GM10248 (cell line): ENCODE measurements at regions of chr12 and their contacts with region 1.

Region 1: GRCh38 chr12:57238854-57239554 is 9.5 kb downstream of the SHMT2 start:
- DNase-seq: peak; percentile 95
- CTCF ChIP-seq: peak; percentile 100

Region 2: GRCh38 chr12:56785141-56785865 is 453.7 kb before region 1 on chr12:
- CTCF ChIA-PET with region 1: no interaction called
- POLR2A ChIA-PET with region 1: no interaction called
- DNase-seq: no peak
- CTCF ChIP-seq: no peak

Region 3: GRCh38 chr12:57213058-57213715 is 25.8 kb before region 1 on chr12:
- CTCF ChIA-PET with region 1: interaction called, 403 read pairs
- POLR2A ChIA-PET with region 1: interaction called, 3 read pairs
- DNase-seq: peak; percentile 89
- CTCF ChIP-seq: peak; percentile 97

Region 4: GRCh38 chr12:57219993-57220754 is 18.8 kb before region 1 on chr12:
- CTCF ChIA-PET with region 1: interaction called, 403 read pairs
- POLR2A ChIA-PET with region 1: interaction called, 3 read pairs
- DNase-seq: no peak
- CTCF ChIP-seq: no peak

Region 5: GRCh38 chr12:57248934-57249742 is 10.1 kb after region 1 on chr12:
- CTCF ChIA-PET with region 1: interaction called, 348 read pairs
- POLR2A ChIA-PET with region 1: no interaction called
- DNase-seq: peak; percentile 53
- CTCF ChIP-seq: no peak

Region 6: DNA sequence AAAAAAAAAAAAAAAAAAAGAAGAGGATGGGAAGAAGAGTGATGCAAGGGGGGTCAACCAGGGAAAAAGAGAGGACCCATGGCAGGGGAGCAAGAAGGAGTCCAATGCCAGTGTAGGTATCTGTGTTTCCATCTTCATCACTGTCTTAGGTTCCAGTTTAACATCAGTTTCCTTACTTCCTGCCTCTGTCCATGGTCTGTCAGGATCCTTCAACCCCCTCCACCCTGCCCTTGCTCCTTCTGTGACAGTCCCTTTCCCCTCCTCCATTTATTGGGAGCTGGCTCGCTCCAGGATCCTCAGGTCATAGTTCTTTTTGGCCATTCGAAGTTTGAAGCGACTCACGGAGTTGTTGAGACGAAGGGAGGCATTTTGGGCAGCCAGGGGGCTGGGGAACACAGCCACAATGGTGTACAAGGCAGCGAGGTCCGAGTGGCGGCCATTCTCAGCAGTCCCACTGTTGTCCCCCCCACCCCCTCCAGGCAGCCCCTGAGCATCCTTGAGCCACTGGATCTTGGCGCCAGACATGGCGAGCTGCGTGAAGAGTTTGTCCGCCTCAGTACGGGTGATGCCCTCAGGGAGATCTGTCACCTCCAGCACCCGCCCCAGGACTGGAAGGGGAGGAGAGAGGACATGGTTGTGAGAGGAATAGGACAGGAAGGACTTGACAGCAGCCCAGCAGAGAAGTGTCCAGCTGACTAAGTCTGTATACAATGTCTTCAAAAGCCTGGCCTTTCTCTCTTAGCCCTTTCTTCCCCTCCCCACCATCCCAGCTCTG is 15.7 kb after region 1 on chr12:
- CTCF ChIA-PET with region 1: interaction called, 48 read pairs
- POLR2A ChIA-PET with region 1: no interaction called
- DNase-seq: no peak
- CTCF ChIP-seq: no peak

Region 7: GRCh38 chr12:57261428-57261865 is 22.4 kb after region 1 on chr12:
- CTCF ChIA-PET with region 1: interaction called, 52 read pairs
- POLR2A ChIA-PET with region 1: no interaction called
- DNase-seq: no peak
- CTCF ChIP-seq: no peak

Region 8: GRCh38 chr12:57272337-57273151 is 33.5 kb after region 1 on chr12:
- CTCF ChIA-PET with region 1: interaction called, 52 read pairs
- POLR2A ChIA-PET with region 1: no interaction called
- DNase-seq: no peak
- CTCF ChIP-seq: no peak